ENCODE measurements at regions of chr2 and their contacts with region 1.

Region 1: DNA sequence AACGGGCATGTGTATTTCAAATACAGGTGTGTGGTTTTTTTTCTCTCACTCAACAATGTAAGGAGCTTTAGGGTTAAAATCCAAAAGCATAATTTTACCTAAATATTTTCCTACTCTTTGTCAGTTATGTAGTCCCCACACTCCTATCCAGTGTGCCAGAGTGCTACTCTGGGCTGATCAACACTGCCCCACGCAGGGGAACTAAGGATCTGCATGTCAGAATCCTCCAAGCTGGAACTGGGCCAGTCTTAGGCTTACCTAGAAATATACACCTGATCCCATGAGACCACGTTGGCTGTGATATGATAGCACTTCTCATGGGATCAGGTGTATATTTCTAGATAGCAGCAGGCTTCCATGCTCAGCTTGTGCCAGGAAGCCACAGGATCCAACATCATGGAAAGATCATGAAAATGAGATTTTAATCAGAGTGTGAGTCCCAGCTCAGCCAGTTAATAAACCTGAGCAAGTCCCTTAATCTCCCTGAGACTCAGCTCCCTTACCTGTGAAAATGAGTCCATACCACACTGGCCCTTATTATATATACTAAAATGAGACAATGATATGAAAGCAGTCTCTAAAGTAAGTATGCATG is 29.7 kb downstream of the CCDC141 start:
- DNase-seq: peak; percentile 60
- H3K4me3 ChIP-seq: no peak overlapping the region
- H3K27ac ChIP-seq: peak overlapping the region; percentile 50
- H3K4me1 ChIP-seq: peaks cover 26% of the 10 kb centered on the region
- CTCF ChIP-seq: peak; percentile 81

Region 2: DNA sequence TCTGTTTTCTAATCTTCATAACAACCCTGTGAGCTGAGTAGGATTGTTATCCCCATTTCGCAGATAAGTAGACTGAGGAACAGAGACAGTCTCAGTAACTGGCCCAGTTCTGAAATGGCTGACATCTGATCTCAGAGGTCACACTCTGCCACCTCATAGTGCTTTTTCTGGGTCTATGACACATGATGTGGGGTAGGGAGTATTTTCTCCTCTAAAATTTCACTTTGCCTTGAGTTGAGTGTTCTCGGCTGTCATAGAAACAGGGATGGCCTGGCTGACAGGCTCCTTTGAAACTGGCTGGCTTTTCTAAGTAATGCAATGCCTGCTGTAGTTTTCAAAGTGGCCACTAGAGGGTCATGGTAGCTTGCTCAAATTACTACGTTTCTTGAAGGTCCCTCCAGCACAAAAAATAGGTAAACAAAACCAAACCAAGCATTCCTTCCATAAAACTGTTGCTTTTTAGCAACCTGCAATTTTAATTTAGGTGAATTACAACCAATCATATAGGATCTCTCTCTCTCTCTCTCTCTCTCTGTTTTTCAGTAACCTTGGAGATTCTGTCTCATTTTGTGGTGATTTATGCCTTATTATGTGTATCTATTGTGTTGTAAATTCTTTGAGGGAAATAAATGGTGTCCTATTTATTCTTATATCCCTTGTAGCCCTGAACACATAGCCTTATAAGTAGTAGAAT is 128.8 kb before region 1 on chr2:
- CTCF ChIA-PET with region 1: no interaction called
- POLR2A ChIA-PET with region 1: interaction called, 3 read pairs
- intact Hi-C with region 1: loop called (anchors 5 kb)
- DNase-seq: peak; percentile 68
- H3K4me3 ChIP-seq: no peak overlapping the region
- H3K27ac ChIP-seq: no peak overlapping the region
- H3K4me1 ChIP-seq: no peaks in the 10 kb centered on the region
- CTCF ChIP-seq: peak; percentile 96

Region 3: DNA sequence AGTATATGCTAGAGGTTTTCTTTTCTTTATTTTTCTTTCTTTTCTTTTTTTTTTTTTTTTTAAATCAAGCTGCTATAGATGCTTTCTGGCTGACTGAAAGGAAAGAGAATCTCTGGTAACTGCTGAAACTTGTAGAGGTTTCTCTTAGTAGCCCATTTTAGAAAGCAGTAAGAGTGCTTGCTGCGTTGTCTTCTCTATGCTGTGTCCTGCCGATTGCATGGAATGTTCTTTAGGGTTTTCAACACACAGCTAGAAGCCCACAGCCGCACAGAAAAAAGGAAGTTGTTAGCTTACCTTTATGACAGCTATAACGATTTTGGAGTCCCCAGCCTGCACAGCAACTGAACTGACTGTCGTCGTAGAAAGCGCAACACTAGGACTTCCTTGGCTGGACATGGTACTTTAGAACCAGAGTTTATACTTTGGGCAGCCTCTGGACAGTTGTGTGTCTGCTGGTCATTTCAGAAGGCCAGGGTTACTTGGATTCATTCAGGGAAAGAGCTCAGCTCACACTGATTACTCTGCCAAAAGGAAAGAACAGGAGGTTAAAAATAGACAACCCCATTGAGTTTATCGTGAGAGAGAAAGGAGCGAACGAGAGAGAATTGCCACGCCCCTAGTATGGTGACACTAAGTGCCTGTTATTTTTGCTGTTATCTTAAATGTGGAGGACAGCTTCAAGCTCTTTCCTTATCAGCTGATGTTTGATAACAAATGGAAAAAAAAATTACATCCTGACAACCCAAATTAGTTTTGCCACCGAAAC is 29.5 kb after region 1 on chr2 and contains the start of gene CCDC141:
- CTCF ChIA-PET with region 1: no interaction called
- POLR2A ChIA-PET with region 1: interaction called, 11 read pairs
- intact Hi-C with region 1: no loop called
- DNase-seq: peak; percentile 24
- H3K4me3 ChIP-seq: no peak within 1 kb of the TSS
- H3K27ac ChIP-seq: no peak within 1 kb of the TSS
- H3K4me1 ChIP-seq: peaks cover 46% of the 10 kb centered on the region
- CTCF ChIP-seq: no peak
- total RNA-seq, gene CCDC141: 0.15 TPM in 1 of 2 replicates, not detected in the other

Measured in OCI-LY7 (cell line).